Gastrocnemius medialis (tissue), 4 donors: ENCODE measurements at regions of chr15 and their contacts with region 1.

Region 1: GRCh38 chr15:99014803-99015676 is 7.4 kb upstream of the PGPEP1L start:
- DNase-seq: peak; percentile 85 to 91
- ATAC-seq: peak; percentile 73 to 77
- H3K4me3 ChIP-seq: peak overlapping the region; percentile 53 to 84 (median 68)
- H3K27ac ChIP-seq: peak overlapping the region; percentile 97 to 99 (median 98)
- H3K4me1 ChIP-seq: peaks cover 23 to 30% of the 10 kb centered on the region in 2 donors
- H3K27me3 ChIP-seq: no peaks in the 10 kb centered on the region
- CTCF ChIP-seq: peak in 1 of 5 experiments; percentile 29
- POLR2A ChIP-seq: peak; percentile 80 to 94

Region 2: GRCh38 chr15:98943601-98944151 is 71.4 kb before region 1 on chr15:
- in situ Hi-C with region 1: no loop called
- intact Hi-C with region 1: loop called (anchors 2 kb)
- DNase-seq: peak; percentile 92 to 94
- ATAC-seq: peak; percentile 83 to 90
- H3K4me3 ChIP-seq: no peak overlapping the region
- H3K27ac ChIP-seq: peak overlapping the region; percentile 82 to 96 (median 90)
- H3K4me1 ChIP-seq: peaks cover 51 to 67% of the 10 kb centered on the region in 2 donors
- H3K27me3 ChIP-seq: no peaks in the 10 kb centered on the region
- CTCF ChIP-seq: no peak
- POLR2A ChIP-seq: peak in 1 of 2 donors; percentile 6

Region 3: DNA sequence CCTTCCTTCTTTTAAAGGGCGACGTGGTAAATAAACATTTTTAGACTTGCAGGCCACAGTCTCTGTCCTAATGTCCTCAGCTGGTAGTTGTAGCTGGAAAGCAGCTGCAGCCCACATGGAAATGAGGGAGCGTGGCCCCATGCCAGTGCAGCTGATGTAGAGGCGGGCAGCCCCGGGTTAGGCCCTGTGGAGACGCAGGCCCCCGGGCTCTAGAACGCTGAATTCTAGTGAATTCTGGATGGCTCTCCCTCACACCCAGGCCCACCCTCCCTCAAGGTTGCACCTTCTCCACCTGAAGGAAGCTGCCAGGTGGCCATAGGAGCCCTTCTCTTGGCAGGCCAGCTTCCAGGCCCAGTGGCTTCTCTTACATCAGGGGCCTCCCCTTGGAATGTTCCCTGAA is 59.7 kb before region 1 on chr15:
- in situ Hi-C with region 1: no loop called
- intact Hi-C with region 1: loop called (anchors 5 kb)
- DNase-seq: peak in 1 of 2 donors; percentile 64
- ATAC-seq: peak; percentile 15 to 28
- H3K4me3 ChIP-seq: no peak overlapping the region
- H3K27ac ChIP-seq: peak overlapping the region; percentile 69 to 89 (median 78)
- H3K4me1 ChIP-seq: peaks cover 34 to 50% of the 10 kb centered on the region in 2 donors
- H3K27me3 ChIP-seq: no peaks in the 10 kb centered on the region
- CTCF ChIP-seq: no peak
- POLR2A ChIP-seq: no peak

Region 4: DNA sequence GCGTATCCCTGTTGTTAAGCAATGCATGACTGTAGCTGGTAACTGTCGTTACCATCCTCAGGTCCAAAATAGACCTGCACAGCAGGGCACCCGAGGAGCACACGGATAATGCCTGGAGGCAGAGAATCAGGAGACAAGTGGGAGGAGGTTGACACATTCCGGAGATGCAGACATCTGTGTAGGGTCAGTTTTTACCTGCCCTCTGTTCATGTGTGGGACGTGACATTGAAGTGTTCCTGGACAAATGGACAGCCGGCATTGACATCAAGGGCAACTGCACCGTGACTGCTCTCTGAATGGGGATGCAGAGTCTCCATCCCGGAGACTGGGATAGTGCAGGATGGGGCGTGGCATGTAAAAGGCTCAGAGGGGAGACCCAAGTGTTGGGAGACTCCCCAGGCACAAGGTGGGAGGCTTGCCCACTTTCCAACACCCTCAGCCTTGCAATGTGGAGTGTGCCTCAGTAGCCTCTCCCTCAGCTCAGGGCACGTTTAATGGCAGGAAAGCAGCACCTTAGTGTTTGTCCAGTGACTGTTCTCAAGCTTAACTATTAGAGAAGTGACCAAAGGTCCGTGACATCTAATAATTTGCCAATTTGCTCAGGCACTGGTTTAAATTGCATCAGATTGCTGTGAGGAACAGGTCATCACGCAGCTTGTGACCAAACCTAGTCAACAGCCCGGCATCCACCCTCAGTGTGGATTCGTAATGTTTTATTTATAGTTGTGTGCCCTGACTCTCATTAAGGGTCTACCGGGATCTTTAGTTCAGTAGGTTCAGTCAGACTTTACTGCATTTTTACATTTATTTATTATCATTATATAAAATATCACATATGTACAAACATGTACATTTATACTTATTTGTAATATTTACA is 38.7 kb after region 1 on chr15:
- in situ Hi-C with region 1: no loop called
- intact Hi-C with region 1: loop called (anchors 1 kb)
- DNase-seq: peak; percentile 72 to 78
- ATAC-seq: peak; percentile 86 to 87
- H3K4me3 ChIP-seq: no peak overlapping the region
- H3K27ac ChIP-seq: peak overlapping the region; percentile 76 to 91 (median 82)
- H3K4me1 ChIP-seq: peaks cover 23 to 30% of the 10 kb centered on the region in 2 donors
- H3K27me3 ChIP-seq: no peaks in the 10 kb centered on the region
- CTCF ChIP-seq: no peak
- POLR2A ChIP-seq: peak; percentile 47 to 78